GM13976 (cell line): ENCODE measurements at regions of chr11 and their contacts with region 1.

Region 1: DNA sequence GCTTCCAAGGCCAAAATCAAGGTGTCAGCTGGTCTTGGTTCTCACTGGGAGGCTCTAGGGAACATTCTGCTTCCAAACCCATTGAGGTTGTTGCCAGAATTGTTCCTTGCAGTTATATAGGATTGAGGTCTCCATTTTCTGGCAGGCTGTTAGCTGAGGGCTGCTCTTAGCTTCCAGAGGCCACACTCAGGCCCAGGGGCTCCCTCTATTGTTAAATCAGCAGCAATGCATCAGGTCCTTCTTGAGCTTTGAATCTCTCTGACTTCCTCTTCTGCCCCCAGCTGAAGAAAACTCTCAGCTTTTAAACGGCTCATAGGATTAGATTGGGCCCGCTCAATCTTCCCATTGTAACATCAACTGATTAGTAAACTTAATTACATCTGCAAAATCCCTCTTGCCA is 39.3 kb upstream of the BSX start:
- DNase-seq: peak; percentile 79
- CTCF ChIP-seq: peak; percentile 66

Region 2: DNA sequence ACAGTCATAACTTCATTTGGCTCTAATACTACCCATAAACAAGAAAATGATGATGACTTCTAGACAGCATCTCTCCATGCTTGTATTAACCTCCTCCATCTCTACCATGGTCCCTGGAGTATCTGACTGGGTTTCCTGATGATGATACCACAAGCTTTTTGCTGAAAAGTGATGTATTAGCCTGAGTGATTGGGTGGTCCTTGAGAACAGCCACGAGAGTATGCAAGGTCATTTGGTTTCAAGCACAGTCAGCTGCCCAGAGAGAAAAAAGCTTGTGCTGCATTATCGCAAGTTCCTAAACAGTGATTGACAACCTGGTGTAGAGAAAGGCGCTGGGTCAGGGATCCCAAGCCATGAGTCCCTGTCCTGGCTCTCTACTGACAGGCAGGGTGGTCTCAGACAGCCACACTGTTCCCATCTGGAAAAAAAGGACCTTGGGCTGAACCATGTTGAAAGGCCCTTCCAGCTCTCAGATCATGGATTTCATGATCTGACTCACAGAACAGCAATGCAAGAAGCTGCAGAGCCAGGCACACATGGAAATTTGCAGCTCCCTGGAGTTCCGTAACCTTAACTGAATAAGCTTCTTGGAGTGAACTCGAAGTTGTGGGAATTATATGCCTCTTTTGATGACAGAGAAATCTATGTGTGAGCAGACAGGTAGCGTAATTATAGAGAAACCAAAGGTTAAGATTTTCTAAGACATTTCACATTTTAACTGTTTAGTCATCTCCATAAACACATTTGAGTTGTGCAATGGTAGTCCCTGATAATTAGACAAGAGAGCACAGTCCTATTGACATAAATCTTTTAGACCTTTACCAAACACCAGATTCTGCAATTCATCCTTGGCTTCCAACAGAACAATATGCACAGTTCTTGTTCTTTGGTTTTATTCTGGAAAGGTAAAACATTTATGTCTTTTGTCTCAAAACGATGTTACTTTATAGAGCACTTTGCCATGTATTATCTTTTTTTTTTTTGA is 419.5 kb before region 1 on chr11:
- in situ Hi-C with region 1: loop called (anchors 25 kb)
- DNase-seq: no peak
- CTCF ChIP-seq: no peak

Region 3: DNA sequence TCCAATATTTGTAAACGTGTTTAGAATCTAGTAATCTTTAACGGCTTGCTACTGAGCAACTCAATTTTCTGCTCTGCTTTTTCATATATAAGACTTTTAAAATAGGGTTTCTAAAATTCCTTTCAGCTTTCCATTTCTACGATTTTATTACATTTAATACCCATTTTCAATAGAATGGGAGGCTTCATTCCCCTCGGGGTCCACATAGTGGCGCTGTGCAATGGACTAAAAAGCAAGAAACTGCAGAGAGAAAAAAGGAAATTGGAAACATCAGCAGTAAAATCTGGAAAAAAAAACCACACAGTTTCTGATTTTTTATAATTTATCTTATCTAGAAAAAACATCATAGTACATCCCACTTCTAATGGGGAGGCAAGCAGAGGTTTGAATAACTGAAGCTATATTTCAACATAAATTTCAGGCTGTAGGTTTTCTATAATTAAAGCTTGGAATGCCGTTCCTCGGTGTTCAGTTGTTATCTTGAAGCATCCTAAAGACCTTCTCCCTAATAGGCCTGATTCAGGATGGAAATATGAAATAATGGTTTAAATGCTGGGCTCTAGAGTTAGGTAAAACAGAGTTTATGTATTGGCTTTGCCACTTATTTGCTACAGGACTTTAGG is 157.2 kb before region 1 on chr11:
- in situ Hi-C with region 1: loop called (anchors 5 kb)
- DNase-seq: no peak
- CTCF ChIP-seq: peak; percentile 76